ENCODE measurements at regions of chr14 and their contacts with region 1.

Region 1: GRCh38 chr14:87745507-87746118 is 247.4 kb downstream of the GALC start:
- DNase-seq: no peak
- H3K4me3 ChIP-seq: no peak overlapping the region
- H3K27ac ChIP-seq: no peak overlapping the region
- H3K4me1 ChIP-seq: no peaks in the 10 kb centered on the region
- H3K27me3 ChIP-seq: no peaks in the 10 kb centered on the region
- CTCF ChIP-seq: peak in 2 of 4 experiments; percentile 14 to 21
- POLR2A ChIP-seq: no peak

Region 2: DNA sequence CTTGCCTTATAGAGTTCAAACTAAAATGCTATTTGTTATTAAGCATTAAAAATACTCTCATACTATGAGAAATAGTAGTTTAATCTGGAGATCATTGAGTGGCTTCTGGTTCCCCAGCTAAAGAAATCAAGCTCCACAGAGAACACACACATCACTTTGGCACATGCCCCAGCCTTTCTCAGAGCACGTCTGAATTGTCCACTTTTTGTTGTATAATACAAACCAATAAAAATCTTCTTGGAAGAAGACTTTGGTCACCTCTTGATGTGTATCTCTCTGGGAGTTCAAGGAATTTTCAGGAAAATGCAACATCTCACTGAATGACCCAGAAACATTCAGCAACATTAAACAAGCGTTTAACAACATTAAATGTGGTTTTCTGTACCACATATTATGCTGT is 166.6 kb before region 1 on chr14:
- intact Hi-C with region 1: no loop called
- DNase-seq: no peak
- H3K4me3 ChIP-seq: no peak overlapping the region
- H3K27ac ChIP-seq: no peak overlapping the region
- H3K4me1 ChIP-seq: no peaks in the 10 kb centered on the region
- H3K27me3 ChIP-seq: no peaks in the 10 kb centered on the region
- CTCF ChIP-seq: no peak
- POLR2A ChIP-seq: no peak

Region 3: DNA sequence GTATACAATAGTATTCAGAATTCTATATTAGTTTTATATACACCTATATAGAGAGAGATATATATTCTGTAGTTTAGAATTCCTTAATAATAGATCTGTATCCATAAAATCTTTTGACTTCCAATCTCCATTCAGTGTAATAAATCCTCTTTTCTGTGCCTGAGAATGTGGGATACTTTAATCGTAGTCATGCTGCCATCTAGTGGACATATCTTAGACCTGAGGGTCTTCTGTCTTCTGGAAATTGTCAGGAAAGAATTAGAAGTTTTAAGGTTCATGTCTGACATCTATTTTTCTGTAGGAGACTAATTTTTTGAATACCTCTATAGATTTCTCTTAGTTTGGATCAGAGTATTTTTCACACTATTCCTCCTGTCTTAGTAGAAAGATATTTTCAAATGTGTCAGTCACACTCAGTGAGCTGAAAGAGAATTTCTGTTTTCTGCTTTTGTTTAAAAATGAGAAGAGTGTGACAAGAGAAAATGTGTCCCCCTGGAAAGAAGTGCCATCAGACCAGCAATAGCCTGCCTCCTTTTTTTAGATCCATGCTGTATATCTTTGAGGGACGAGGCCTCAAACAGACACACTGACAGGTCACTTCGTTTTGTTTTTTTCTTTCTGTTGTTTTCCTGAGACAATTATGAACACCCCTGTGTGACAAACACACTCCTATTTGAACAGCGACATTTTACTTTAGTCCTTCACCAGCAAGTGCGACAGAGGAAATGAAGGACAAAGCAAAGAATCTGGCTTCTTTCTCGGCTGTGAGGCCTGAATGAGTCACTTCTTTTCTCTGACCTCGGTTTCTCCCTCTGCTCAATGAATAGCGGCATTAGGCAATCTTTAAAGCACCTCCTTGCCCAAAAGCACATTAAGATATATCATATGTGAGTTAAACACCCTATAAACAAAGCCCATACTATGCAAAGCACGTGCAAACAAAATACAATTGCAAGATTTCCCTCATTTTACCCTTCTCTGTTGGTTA is 151.1 kb after region 1 on chr14:
- intact Hi-C with region 1: loop called (anchors 10 kb)
- DNase-seq: no peak
- H3K4me3 ChIP-seq: no peak overlapping the region
- H3K27ac ChIP-seq: no peak overlapping the region
- H3K4me1 ChIP-seq: no peaks in the 10 kb centered on the region
- H3K27me3 ChIP-seq: no peaks in the 10 kb centered on the region
- CTCF ChIP-seq: peak; percentile 38 to 57 (median 50)
- POLR2A ChIP-seq: no peak